ENCODE measurements at regions of chr4 and their contacts with region 1.

Region 1: DNA sequence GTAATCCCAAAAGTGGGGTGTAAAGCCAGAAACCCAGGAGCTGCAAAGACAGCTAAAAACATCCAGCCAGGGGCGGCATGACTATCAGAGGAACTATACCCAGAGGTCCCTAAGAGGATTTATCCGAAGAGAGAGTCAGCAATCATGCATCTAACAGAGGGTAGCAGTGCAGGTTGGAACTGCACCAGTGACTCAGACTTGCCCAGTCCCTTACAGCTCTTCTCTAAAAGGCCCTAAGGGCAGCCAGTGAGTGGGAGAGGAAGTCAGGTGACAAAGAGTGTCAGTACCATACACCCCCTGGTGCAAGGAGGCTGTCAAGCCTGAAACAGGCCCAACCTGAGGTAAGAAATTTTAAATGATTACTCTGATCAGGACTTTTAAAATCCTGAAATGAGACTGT is 88.1 kb downstream of the CAMK2D start:
- DNase-seq: peak; percentile 50
- H3K4me3 ChIP-seq: no peak overlapping the region
- H3K27ac ChIP-seq: peak overlapping the region; percentile 2
- H3K4me1 ChIP-seq: peaks cover 55% of the 10 kb centered on the region
- CTCF ChIP-seq: 0 out of 2 replicates have a peak, but pooled peaks have one; percentile 18

Region 2: DNA sequence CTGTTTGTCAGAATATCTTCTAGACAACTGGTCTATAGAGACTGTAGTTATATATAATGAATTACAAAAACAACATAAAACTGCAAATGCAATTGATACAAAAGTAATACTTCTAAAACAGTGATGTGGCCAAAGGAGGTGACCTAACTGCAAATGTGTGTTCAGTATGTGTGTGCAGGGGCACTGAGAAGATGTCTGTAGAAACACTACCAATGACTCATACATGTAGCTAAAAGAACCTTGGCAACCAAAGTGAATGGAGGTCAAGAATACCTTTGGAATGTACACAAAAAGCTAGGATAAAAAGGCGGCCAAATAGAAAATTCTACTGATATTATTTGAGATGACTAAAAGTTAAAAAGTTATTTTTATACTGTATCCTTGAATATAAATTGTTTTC is 173.8 kb before region 1 on chr4:
- CTCF ChIA-PET with region 1: no interaction called
- POLR2A ChIA-PET with region 1: no interaction called
- intact Hi-C with region 1: no loop called
- DNase-seq: no peak
- H3K4me3 ChIP-seq: no peak overlapping the region
- H3K27ac ChIP-seq: no peak overlapping the region
- H3K4me1 ChIP-seq: no peaks in the 10 kb centered on the region
- CTCF ChIP-seq: no peak

Region 3: GRCh38 chr4:113645771-113646441 is 27.5 kb before region 1 on chr4:
- CTCF ChIA-PET with region 1: no interaction called
- POLR2A ChIA-PET with region 1: interaction called, 64 read pairs
- intact Hi-C with region 1: no loop called
- DNase-seq: no peak
- H3K4me3 ChIP-seq: no peak overlapping the region
- H3K27ac ChIP-seq: no peak overlapping the region
- H3K4me1 ChIP-seq: peaks cover 39% of the 10 kb centered on the region
- CTCF ChIP-seq: no peak

Region 4: GRCh38 chr4:113692809-113693411 is 19.5 kb after region 1 on chr4:
- CTCF ChIA-PET with region 1: no interaction called
- POLR2A ChIA-PET with region 1: interaction called, 22 read pairs
- intact Hi-C with region 1: no loop called
- DNase-seq: peak; percentile 59
- H3K4me3 ChIP-seq: peak overlapping the region; percentile 21
- H3K27ac ChIP-seq: peak overlapping the region; percentile 60
- H3K4me1 ChIP-seq: peaks cover 50% of the 10 kb centered on the region
- CTCF ChIP-seq: no peak